ENCODE measurements at regions of chr12 and their contacts with region 1.

Region 1: GRCh38 chr12:95322326-95322725 is 104.7 kb downstream of the VEZT start:
- DNase-seq: no peak
- H3K4me3 ChIP-seq: no peak overlapping the region
- CTCF ChIP-seq: no peak

Region 2: DNA sequence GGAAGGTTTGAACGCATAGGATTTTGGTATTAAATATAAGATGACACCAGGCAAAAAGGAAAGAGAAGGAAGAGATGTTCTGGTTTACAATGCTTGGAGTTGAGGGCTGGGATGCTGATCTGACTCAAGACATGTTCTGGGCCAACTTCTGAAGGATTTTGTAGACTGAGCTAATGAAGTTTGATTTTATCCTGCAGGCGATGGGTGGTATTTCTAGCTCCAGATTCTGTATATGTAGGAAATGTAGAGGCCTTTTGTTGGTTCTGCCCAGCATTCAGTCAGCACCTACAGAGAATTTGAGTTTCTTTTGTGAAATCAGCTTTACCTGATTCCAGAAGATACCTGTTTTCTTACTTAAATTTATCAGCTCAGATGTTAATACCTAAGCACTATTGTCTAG is 56.6 kb before region 1 on chr12:
- in situ Hi-C with region 1: loop called (anchors 5 kb)
- DNase-seq: no peak
- H3K4me3 ChIP-seq: no peak overlapping the region
- CTCF ChIP-seq: no peak